Activated CD4-positive, alpha-beta T cell treated with anti-CD3 and anti-CD28 coated beads for 36 hours (primary cell): ENCODE measurements at regions of chr13 and their contacts with region 1.

Region 1: DNA sequence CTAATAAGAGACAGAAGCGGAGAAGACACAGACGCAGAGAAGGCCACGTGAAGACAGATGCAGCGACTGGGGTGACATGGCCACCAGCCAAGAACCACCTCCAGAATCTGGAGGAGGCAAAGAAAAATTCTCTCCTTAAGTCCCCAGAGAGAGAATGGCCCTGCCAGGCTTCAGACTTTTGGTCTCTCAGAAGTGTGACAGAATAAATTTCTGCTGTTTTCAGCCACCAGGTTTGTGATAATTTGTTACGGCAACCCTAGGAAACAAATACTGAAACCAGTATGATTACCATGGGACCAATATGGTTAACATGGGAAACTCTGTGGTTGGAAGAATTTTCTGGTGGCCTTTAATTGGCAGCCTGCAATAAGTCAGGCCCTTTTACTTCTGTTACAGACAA is 63.9 kb upstream of the DOCK9 start:
- DNase-seq: no peak
- ATAC-seq: peak; percentile 10
- H3K4me3 Mint-ChIP-seq: no peak overlapping the region
- H3K27ac Mint-ChIP-seq: peak overlapping the region; percentile 49
- H3K4me1 Mint-ChIP-seq: peaks cover 82% of the 10 kb centered on the region
- H3K27me3 Mint-ChIP-seq: no peaks in the 10 kb centered on the region

Region 2: DNA sequence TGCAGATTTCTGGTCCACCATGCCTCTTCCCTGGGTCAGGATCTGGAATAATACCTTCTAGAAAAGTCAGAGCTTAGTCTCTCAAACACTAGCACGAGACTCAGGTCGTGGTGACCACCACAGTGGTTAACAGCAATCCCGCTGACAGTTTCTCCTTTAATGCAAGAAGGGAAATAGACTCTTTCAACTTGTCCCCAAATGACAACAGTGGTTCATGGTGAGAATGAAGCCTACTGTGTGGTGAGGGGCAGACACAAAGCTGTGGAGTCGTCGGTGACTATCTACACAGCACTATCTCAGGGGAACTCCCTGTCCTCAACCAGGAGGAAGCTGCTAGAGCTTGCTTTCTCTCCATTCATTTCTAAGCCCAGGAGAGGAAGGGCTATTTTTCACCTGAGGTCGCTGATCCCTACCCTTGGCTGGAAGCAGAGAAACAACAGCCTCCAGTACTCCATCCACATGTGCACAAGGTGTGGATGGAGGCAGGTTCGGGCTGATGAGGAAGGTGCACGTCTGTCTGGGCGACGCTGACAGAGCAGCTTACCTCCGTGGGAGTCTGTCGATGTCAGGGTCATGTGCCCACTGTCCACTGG is 537.3 kb before region 1 on chr13:
- CTCF ChIA-PET with region 1: no interaction called
- POLR2A ChIA-PET with region 1: interaction called, 11 read pairs
- intact Hi-C with region 1: no loop called
- DNase-seq: peak; percentile 60
- ATAC-seq: peak; percentile 90
- H3K4me3 Mint-ChIP-seq: no peak overlapping the region
- H3K27ac Mint-ChIP-seq: peak overlapping the region; percentile 20
- H3K4me1 Mint-ChIP-seq: peaks cover 91% of the 10 kb centered on the region
- H3K27me3 Mint-ChIP-seq: no peaks in the 10 kb centered on the region

Region 3: GRCh38 chr13:98896634-98897155 is 145.1 kb before region 1 on chr13:
- CTCF ChIA-PET with region 1: no interaction called
- POLR2A ChIA-PET with region 1: no interaction called
- intact Hi-C with region 1: no loop called
- DNase-seq: no peak
- ATAC-seq: no peak
- H3K4me3 Mint-ChIP-seq: no peak overlapping the region
- H3K27ac Mint-ChIP-seq: no peak overlapping the region
- H3K4me1 Mint-ChIP-seq: peaks cover 2% of the 10 kb centered on the region
- H3K27me3 Mint-ChIP-seq: no peaks in the 10 kb centered on the region

Region 4: DNA sequence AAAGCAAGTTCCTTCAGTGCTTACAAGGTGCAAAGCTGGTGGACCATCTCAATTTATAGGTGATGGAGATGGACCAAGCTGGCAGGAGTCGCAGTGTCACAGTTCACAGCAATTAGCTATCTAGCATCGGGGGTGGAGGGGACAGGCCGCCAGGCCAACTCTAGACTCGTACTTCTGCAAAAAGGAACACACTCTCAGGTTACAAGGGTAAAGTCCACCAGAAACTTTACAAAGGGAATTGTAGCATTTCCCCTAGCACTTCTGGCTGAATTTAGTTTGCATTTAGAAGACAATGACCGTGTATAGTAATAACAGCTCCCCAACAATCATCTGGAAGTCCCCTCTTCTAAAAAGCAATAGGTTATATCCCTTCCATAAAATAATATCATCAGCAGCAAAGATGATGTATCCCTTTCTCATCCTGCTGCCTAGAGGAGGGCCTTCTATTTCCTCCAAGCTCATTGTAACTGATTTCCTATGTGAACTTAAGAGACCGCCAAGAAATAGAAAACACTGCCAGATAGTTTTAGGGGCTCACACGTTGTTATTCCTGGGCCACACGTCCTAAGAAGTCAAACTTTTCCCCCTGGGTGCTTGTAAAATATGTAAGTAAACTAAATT is 55.5 kb before region 1 on chr13:
- CTCF ChIA-PET with region 1: no interaction called
- POLR2A ChIA-PET with region 1: no interaction called
- intact Hi-C with region 1: no loop called
- DNase-seq: no peak
- ATAC-seq: no peak
- H3K4me3 Mint-ChIP-seq: no peak overlapping the region
- H3K27ac Mint-ChIP-seq: no peak overlapping the region
- H3K4me1 Mint-ChIP-seq: peaks cover 74% of the 10 kb centered on the region
- H3K27me3 Mint-ChIP-seq: no peaks in the 10 kb centered on the region